ENCODE measurements at regions of chrX and their contacts with region 1.

Region 1: DNA sequence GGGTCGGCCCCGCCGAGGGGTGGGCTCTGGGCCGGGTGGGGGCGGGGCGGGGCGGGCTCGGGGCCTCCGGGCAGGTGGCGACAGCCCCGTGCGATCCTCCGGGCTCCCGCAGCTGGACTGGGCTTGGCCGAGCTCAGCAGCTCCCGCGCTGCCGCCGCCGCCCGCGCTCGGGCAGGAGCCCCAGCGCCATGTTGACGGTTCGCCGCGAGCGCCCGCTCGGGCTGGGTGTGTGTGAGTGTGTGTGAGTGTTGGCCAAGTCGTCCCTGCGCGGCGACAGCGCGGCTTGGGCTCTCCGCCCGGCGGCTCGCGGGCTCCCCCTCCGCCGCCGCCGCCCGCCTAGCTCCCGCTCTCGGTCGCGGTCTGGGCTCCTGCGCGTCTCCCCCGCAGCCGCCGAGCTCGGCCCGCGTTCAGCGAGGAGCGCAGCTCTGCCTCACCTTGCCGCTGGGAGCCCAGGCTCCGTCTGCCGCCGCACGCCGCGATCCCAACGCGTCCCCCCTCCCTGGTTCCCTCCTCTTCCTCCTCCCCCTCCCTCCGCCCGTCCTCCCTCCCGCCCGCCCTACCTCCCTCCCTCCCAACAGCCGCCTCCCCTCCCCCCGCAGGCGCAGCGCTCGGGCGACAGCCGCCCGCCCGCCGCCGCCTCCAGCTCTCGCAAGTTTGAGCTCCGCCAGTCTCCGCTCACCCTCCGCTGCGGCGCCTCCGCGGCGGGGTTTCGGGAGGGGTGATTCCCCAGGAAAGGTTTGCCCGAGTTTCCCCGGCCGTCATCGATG is at the start of gene BCOR:
- DNase-seq: peak in 1 of 2 experiments; percentile 63
- H3K4me3 ChIP-seq: peak within 1 kb of the TSS; percentile 35 to 79 (median 56)
- H3K27ac ChIP-seq: no peak within 1 kb of the TSS
- H3K4me1 ChIP-seq: peaks cover 4 to 26% (median 13%) of the 10 kb centered on the region in 4 experiments
- H3K27me3 ChIP-seq: peaks cover 0 to 25% (median 9%) of the 10 kb centered on the region in 4 experiments; a peak in 5 of 7 replicates
- CTCF ChIP-seq: no peak
- EP300 ChIP-seq: no peak
- POLR2A ChIP-seq: peak in 1 of 2 experiments; percentile 85; a peak in 2 of 3 replicates
- RAD21 ChIP-seq: no peak
- total RNA-seq, gene BCOR: 50.8 and 54.7 TPM in 2 replicates

Region 2: GRCh38 chrX:40040686-40041461 is 56.8 kb before region 1 on chrX:
- CTCF ChIA-PET with region 1: no interaction called
- POLR2A ChIA-PET with region 1: no interaction called
- DNase-seq: no peak
- H3K4me3 ChIP-seq: no peak overlapping the region
- H3K27ac ChIP-seq: no peak overlapping the region
- H3K4me1 ChIP-seq: no peaks in the 10 kb centered on the region
- H3K27me3 ChIP-seq: no peaks in the 10 kb centered on the region
- CTCF ChIP-seq: no peak
- EP300 ChIP-seq: no peak
- POLR2A ChIP-seq: no peak
- RAD21 ChIP-seq: no peak

Region 3: GRCh38 chrX:40083120-40083978 is 14.3 kb before region 1 on chrX:
- CTCF ChIA-PET with region 1: interaction called, 11 read pairs
- POLR2A ChIA-PET with region 1: interaction called, 30 read pairs
- DNase-seq: peak in 1 of 2 experiments; percentile 57
- H3K4me3 ChIP-seq: peak overlapping the region; percentile 17 to 61 (median 28); a peak in 7 of 8 replicates
- H3K27ac ChIP-seq: no peak overlapping the region
- H3K4me1 ChIP-seq: peaks cover 19 to 57% (median 40%) of the 10 kb centered on the region in 4 experiments
- H3K27me3 ChIP-seq: peaks cover 0 to 37% (median 14%) of the 10 kb centered on the region in 4 experiments; a peak in 5 of 7 replicates
- CTCF ChIP-seq: no peak
- EP300 ChIP-seq: no peak
- POLR2A ChIP-seq: 0 out of 3 replicates have a peak, but pooled peaks of 1 of the 2 experiments have one; percentile 23
- RAD21 ChIP-seq: no peak

Region 4: DNA sequence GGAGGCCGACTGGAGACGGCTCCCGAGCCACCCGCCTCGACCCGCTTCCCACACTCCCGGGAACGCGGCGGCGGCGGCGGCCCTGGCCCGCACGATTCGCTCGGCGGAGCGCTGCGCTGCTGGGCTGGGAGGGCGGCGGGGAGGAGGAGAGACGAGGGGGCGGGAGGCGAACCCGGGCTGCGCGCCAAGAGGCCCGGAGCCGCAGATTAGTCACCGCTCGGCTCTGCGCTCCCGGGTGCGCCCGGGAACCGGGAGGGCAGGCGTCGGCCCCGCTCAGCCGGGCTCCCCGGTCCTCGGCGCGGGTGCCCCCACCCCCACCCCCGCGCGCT is 11.2 kb after region 1 on chrX:
- CTCF ChIA-PET with region 1: no interaction called
- POLR2A ChIA-PET with region 1: interaction called, 35 read pairs
- DNase-seq: peak in 1 of 2 experiments; percentile 66
- H3K4me3 ChIP-seq: peak overlapping the region; percentile 43 to 66 (median 48)
- H3K27ac ChIP-seq: no peak overlapping the region; the same call in 1 of the 2 replicates
- H3K4me1 ChIP-seq: peaks cover 0 to 5% (median under 1%) of the 10 kb centered on the region in 4 experiments; a peak in 4 of 7 replicates
- H3K27me3 ChIP-seq: peaks cover 2 to 8% (median 6%) of the 10 kb centered on the region in 4 experiments; a peak in 6 of 7 replicates
- CTCF ChIP-seq: no peak
- EP300 ChIP-seq: no peak
- POLR2A ChIP-seq: no peak
- RAD21 ChIP-seq: no peak

Region 5: DNA sequence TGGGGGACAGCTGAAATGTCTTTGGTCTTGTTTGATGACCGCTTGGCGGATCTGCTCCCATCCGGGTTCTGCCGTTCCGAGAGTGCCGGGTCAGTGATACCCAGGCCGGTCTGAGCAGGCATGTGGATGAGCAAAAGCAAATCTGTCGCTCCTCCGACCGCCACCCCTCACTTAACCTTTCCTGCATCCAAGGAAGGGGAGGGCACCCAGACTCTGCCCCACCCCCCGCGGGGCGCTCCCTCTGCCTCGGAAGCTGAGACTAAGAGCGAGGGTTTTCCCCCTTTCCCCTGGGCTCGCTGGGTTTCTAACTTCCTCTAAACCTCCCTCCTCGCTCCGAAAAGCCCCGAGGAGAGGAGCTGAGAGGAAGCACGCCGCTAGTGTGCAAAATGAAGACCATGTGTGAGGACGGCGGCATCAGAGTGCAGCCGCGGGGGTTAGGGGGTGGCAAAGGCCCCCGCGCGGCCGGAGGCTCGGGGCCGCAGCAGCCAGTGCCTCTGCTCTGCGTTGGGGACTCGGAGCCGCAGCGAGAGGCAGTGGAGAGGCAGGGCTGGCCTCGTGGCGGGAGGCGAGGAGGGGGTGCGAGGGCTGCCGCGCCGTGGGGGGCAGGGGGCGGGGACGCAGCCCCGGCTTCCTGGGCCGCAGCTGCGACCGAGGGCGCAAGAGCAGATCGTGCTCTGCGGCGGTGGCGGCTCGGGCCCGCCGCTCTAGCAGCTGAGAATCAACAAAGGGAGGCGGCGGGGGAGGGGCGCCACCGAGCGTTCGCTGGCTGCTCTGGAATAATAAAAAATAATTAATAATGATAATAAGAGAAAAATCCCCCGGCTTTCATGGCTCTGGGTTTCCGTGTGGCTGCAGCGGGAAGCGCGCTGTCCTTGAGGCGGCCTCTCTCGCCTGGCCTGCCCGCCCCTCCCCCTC is 55.9 kb after region 1 on chrX:
- CTCF ChIA-PET with region 1: interaction called, 5 read pairs
- POLR2A ChIA-PET with region 1: interaction called, 509 read pairs
- DNase-seq: peak in 1 of 2 experiments; percentile 51
- H3K4me3 ChIP-seq: peak overlapping the region; percentile 36 to 86 (median 54)
- H3K27ac ChIP-seq: no peak overlapping the region
- H3K4me1 ChIP-seq: peaks cover 6 to 22% (median 15%) of the 10 kb centered on the region in 4 experiments
- H3K27me3 ChIP-seq: peaks cover 8 to 36% (median 28%) of the 10 kb centered on the region in 4 experiments
- CTCF ChIP-seq: no peak
- EP300 ChIP-seq: no peak
- POLR2A ChIP-seq: no peak; a peak in 1 of 3 replicates
- RAD21 ChIP-seq: no peak

Region 6: DNA sequence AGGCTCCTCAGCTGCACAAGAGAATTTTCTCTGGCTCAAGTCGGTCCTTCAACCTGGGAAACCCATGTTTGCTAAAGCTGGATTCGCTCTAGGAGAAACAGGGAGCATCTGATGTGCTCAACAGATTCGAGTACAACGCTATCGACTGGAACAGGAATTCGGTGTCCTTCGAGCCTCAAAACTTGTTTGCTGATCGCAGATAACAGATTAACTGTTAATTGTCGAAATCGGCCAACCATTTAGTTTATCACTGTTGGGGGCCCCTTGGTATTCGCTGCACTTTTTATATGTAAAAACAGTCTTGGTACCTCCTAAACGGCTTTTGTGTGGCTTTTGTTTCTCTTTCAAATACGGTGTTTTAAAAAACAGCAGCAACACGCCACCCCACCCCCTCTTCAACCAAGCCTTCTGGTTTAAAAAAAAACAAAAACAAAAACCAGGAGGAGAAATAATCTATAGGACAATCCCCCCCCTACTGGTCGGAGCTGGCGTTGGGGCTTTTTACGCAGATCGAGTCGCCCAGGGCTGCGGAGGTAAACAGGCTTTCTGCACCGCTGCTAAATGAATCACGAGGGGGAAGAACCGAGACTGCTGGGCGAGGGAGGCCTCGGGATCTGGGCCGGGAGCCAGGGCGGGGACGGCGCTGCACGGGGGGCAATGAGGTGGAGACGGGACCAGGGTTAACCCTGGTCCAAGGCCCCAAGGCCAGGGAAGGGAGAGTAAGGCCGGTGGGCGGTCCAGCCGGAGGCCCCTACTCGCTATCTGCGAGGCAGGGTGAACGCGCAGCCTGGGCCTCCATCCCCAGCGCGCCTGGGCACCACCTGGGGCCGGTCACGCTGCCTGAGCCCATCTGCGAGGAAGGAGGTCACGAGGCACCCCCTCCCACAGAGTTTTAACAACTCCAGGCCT is 71.8 kb after region 1 on chrX:
- CTCF ChIA-PET with region 1: no interaction called
- POLR2A ChIA-PET with region 1: interaction called, 45 read pairs
- DNase-seq: peak; percentile 73 to 75
- H3K4me3 ChIP-seq: peak overlapping the region; percentile 12 to 50 (median 18); a peak in 6 of 8 replicates
- H3K27ac ChIP-seq: peak overlapping the region; percentile 86; the same call in 1 of the 2 replicates
- H3K4me1 ChIP-seq: peaks cover 3 to 37% (median 28%) of the 10 kb centered on the region in 4 experiments
- H3K27me3 ChIP-seq: peaks cover 0 to 7% (median 0%) of the 10 kb centered on the region in 4 experiments; a peak in 4 of 7 replicates
- CTCF ChIP-seq: peak in 2 of 3 experiments; percentile 35 to 36; a peak in 2 of 4 replicates
- EP300 ChIP-seq: peak in 1 of 2 experiments; percentile 64; a peak in 1 of 3 replicates
- POLR2A ChIP-seq: peak in 1 of 2 experiments; percentile 30; a peak in 1 of 3 replicates
- RAD21 ChIP-seq: peak; percentile 50 to 59

Region 7: DNA sequence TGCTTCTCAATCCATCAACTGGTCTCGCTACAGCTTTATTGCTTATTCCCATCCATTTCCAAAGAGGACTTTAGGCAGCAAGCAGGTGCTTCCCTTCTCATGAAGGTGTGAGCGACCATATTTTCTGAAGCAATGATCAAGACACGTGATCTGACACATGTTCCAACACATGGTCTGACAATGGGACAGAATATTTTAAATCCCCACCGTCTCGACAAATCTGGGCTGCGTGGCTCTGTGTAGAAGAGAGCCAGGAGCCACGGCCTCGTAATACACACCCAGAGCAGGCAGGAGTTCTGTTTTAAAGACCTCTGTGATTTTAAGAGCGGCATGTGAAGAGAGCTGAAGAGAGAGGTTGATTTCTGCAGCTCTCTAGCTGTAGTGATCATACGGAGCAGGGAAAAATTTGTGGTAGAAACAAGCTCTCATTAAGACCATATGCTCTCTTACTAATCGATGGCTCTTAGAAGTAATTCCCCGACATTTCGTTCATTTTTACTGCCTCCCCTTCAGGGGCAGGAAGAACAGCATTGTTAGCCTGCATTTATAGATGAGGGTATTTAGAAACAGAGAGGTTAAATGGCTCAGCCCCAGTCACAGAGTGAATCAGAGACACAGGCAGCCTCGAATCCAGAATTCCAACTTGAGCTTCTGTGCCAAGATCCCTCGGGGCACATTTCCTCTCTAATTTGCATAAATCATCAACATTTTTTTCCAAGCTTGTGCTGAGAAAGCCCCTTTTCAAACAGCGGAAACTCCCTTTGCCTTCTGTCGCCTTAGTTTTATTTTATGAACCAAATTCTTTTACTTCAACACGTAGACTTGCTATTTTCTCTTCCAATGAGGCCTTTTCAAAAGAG is 91.1 kb after region 1 on chrX:
- CTCF ChIA-PET with region 1: no interaction called
- POLR2A ChIA-PET with region 1: no interaction called
- DNase-seq: no peak
- H3K4me3 ChIP-seq: no peak overlapping the region
- H3K27ac ChIP-seq: no peak overlapping the region
- H3K4me1 ChIP-seq: no peaks in the 10 kb centered on the region
- H3K27me3 ChIP-seq: no peaks in the 10 kb centered on the region
- CTCF ChIP-seq: no peak
- EP300 ChIP-seq: no peak
- POLR2A ChIP-seq: no peak
- RAD21 ChIP-seq: no peak

Measured in H1 (cell line).